CD8-positive, alpha-beta T cell (primary cell): ENCODE measurements at regions of chr6 and their contacts with region 1.

Region 1: GRCh38 chr6:111709615-111710398 is 104.1 kb upstream of the TRAF3IP2 start:
- DNase-seq: peak; percentile 29 to 85 (median 57)
- ATAC-seq: peak; percentile 83
- H3K4me3 ChIP-seq: no peak overlapping the region
- H3K4me3 Mint-ChIP-seq: no peak overlapping the region
- H3K27ac ChIP-seq: peak overlapping the region in 1 of 2 experiments; percentile 48
- H3K27ac Mint-ChIP-seq: peak overlapping the region; percentile 85
- H3K4me1 ChIP-seq: peaks cover 30% of the 10 kb centered on the region
- H3K4me1 Mint-ChIP-seq: peaks cover 52% of the 10 kb centered on the region
- H3K27me3 ChIP-seq: no peaks in the 10 kb centered on the region
- H3K27me3 Mint-ChIP-seq: no peaks in the 10 kb centered on the region
- CTCF ChIP-seq: peak; percentile 80

Region 2: GRCh38 chr6:111604259-111605099 is 105.3 kb before region 1 on chr6:
- CTCF ChIA-PET with region 1: no interaction called
- POLR2A ChIA-PET with region 1: no interaction called
- intact Hi-C with region 1: no loop called
- DNase-seq: peak in 1 of 9 experiments; percentile 10
- ATAC-seq: no peak
- H3K4me3 ChIP-seq: peak overlapping the region; percentile 51 to 63
- H3K4me3 Mint-ChIP-seq: peak overlapping the region; percentile 95
- H3K27ac ChIP-seq: peak overlapping the region in 1 of 2 experiments; percentile 80
- H3K27ac Mint-ChIP-seq: peak overlapping the region; percentile 55
- H3K4me1 ChIP-seq: peaks cover 22% of the 10 kb centered on the region
- H3K4me1 Mint-ChIP-seq: peaks cover 65% of the 10 kb centered on the region
- H3K27me3 ChIP-seq: no peaks in the 10 kb centered on the region
- H3K27me3 Mint-ChIP-seq: no peaks in the 10 kb centered on the region
- CTCF ChIP-seq: no peak

Region 3: GRCh38 chr6:111721753-111722154 is 11.9 kb after region 1 on chr6:
- CTCF ChIA-PET with region 1: interaction called, 16 read pairs
- POLR2A ChIA-PET with region 1: interaction called, 3 read pairs
- intact Hi-C with region 1: no loop called
- DNase-seq: peak in 7 of 9 experiments; percentile 21 to 74 (median 58)
- ATAC-seq: peak; percentile 39
- H3K4me3 ChIP-seq: no peak overlapping the region
- H3K4me3 Mint-ChIP-seq: no peak overlapping the region
- H3K27ac ChIP-seq: peak overlapping the region in 1 of 2 experiments; percentile 72
- H3K27ac Mint-ChIP-seq: peak overlapping the region; percentile 83
- H3K4me1 ChIP-seq: peaks cover 46% of the 10 kb centered on the region
- H3K4me1 Mint-ChIP-seq: peaks cover 86% of the 10 kb centered on the region
- H3K27me3 ChIP-seq: no peaks in the 10 kb centered on the region
- H3K27me3 Mint-ChIP-seq: no peaks in the 10 kb centered on the region
- CTCF ChIP-seq: peak; percentile 66

Region 4: DNA sequence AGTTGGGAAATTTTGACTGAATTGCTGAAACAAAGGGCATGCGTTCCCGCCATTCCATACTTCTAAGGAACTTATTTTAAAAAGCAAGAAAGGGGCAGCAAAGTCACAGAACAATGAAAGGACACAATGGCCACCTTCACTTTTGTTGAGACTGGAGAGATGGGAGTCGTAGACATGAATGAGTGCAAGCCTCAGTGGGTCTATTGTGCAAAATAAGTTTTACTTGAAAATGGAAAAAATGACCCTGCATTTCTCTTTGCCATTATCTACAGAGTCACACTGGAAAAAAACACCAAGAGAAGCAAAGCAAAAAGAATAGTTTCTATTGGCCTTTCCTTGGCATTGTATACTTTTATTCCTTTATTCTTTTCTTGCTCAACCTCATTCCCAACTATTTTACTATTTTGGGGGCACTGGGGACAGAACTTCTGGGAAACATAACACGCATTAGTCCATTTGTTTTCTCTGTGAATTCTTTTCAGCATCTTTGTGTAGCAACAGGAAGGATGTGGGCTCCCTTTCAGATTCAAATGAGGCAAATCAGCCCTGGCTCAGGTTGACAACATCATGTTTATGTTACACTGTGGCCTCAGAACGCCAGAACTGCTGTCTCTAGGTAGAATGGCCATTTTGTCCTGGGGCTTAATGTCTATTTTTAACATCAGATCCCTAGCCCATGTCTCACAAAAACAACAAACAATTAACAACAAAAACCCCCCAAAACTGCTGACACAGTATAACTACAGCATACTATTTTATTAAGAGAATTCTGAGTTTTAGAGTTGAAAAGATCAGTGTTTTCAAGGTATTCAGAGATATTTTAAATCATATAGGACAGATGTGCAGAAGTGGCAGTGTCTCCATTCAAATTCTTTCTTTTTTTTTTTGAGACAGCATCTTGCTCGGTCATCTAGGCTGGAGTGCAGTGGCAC is 41.2 kb after region 1 on chr6:
- CTCF ChIA-PET with region 1: interaction called, 13 read pairs
- POLR2A ChIA-PET with region 1: no interaction called
- intact Hi-C with region 1: loop called in 1 of 2 experiments (anchors 2 kb)
- DNase-seq: peak in 8 of 9 experiments; percentile 42 to 93 (median 67)
- ATAC-seq: peak; percentile 76
- H3K4me3 ChIP-seq: peak overlapping the region in 1 of 2 experiments; percentile 9
- H3K4me3 Mint-ChIP-seq: peak overlapping the region; percentile 53
- H3K27ac ChIP-seq: peak overlapping the region; percentile 73 to 99
- H3K27ac Mint-ChIP-seq: peak overlapping the region; percentile 97
- H3K4me1 ChIP-seq: peaks cover 97% of the 10 kb centered on the region
- H3K4me1 Mint-ChIP-seq: peaks cover 95% of the 10 kb centered on the region
- H3K27me3 ChIP-seq: no peaks in the 10 kb centered on the region
- H3K27me3 Mint-ChIP-seq: no peaks in the 10 kb centered on the region
- CTCF ChIP-seq: no peak

Region 5: GRCh38 chr6:111823831-111824607 is 114.2 kb after region 1 on chr6:
- CTCF ChIA-PET with region 1: interaction called, 10 read pairs
- POLR2A ChIA-PET with region 1: no interaction called
- intact Hi-C with region 1: no loop called
- DNase-seq: peak in 3 of 9 experiments; percentile 40 to 81 (median 65)
- ATAC-seq: peak; percentile 82
- H3K4me3 ChIP-seq: no peak overlapping the region
- H3K4me3 Mint-ChIP-seq: peak overlapping the region; percentile 20
- H3K27ac ChIP-seq: peak overlapping the region in 1 of 2 experiments; percentile 71
- H3K27ac Mint-ChIP-seq: peak overlapping the region; percentile 92
- H3K4me1 ChIP-seq: peaks cover 48% of the 10 kb centered on the region
- H3K4me1 Mint-ChIP-seq: peaks cover 84% of the 10 kb centered on the region
- H3K27me3 ChIP-seq: no peaks in the 10 kb centered on the region
- H3K27me3 Mint-ChIP-seq: no peaks in the 10 kb centered on the region
- CTCF ChIP-seq: no peak

Region 6: GRCh38 chr6:111997078-111997852 is 287.5 kb after region 1 on chr6:
- CTCF ChIA-PET with region 1: interaction called, 71 read pairs
- POLR2A ChIA-PET with region 1: interaction called, 5 read pairs
- intact Hi-C with region 1: loop called (anchors 1 kb)
- DNase-seq: peak; percentile 59 to 91 (median 82)
- ATAC-seq: peak; percentile 71
- H3K4me3 ChIP-seq: peak overlapping the region in 1 of 2 experiments; percentile 13
- H3K4me3 Mint-ChIP-seq: peak overlapping the region; percentile 71
- H3K27ac ChIP-seq: no peak overlapping the region
- H3K27ac Mint-ChIP-seq: peak overlapping the region; percentile 89
- H3K4me1 ChIP-seq: peaks cover 37% of the 10 kb centered on the region
- H3K4me1 Mint-ChIP-seq: peaks cover 45% of the 10 kb centered on the region
- H3K27me3 ChIP-seq: no peaks in the 10 kb centered on the region
- H3K27me3 Mint-ChIP-seq: no peaks in the 10 kb centered on the region
- CTCF ChIP-seq: peak; percentile 98

Region 7: DNA sequence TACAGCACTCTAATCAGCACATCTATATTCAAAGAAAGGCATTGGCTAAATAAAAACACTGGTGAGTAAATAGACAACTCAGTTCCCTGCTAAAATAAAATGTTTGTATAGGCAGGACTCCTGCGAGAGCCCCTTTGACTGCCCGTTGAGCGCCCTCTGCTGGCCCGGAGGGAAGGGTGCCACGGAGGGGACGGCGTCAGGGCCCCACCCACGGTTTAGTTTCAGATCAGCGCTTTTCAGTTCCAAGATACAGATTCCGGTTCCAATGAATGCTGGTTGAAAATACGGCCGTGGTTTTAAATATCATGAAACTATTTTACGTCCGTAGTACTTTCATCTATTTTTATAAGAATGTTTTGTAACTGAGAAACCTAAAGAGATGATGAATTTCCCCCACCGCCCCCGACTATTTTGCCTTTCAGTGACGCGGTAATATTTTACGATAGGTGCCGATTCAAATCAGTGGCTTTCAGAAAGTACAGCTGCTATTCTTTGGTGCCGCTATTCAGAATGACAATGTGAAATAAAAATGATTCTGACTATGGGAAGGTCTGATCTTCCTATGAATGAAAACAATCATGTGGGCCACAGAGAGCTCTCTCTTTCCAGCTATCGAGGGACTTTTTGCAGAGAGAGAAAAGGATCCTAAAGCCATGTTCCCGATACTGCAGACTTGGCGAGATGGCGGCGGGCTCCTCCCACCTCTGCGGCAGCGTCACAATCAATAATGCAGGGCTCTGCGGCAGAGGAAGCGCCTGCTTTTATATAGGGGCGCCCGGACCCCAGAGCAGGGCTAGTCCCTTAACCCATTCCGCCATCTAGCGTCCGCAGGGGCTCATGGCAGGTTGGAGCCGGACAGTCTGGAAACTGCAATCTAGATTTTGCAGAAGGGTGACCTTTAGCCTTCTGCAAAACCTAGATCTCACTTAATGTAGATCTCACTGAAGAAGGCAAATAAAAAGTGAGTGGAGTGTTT is 333.5 kb after region 1 on chr6:
- CTCF ChIA-PET with region 1: interaction called, 115 read pairs
- POLR2A ChIA-PET with region 1: interaction called, 9 read pairs
- intact Hi-C with region 1: loop called (anchors 1 kb)
- DNase-seq: peak; percentile 87 to 96 (median 93)
- ATAC-seq: peak; percentile 93
- H3K4me3 ChIP-seq: peak overlapping the region; percentile 56 to 65
- H3K4me3 Mint-ChIP-seq: peak overlapping the region; percentile 97
- H3K27ac ChIP-seq: peak overlapping the region; percentile 83 to 88
- H3K27ac Mint-ChIP-seq: peak overlapping the region; percentile 99
- H3K4me1 ChIP-seq: peaks cover 6% of the 10 kb centered on the region
- H3K4me1 Mint-ChIP-seq: peaks cover 21% of the 10 kb centered on the region
- H3K27me3 ChIP-seq: no peaks in the 10 kb centered on the region
- H3K27me3 Mint-ChIP-seq: no peaks in the 10 kb centered on the region
- CTCF ChIP-seq: peak; percentile 82